Activated naive CD4-positive, alpha-beta T cell treated with anti-CD3 and anti-CD28 coated beads for 36 hours (primary cell): ENCODE measurements at regions of chr4 and their contacts with region 1.

Region 1: DNA sequence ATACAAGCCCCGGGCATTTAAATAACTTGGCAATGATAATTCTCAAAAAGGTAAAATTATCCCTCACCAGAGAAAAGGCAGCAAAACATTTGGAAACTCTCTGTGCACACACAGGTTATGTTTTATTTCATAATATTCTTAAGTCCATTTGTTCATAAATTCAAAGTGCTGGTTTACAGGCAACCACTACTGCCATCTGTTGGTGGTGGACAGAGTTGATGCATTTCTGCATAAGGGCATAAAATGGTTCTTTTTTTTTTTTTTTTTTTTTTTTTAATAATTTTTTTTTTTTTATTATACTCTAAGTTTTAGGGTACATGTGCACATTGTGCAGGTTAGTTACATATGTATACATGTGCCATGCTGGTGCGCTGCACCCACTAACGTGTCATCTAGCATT is 31.5 kb upstream of the IL21 start:
- DNase-seq: peak; percentile 88
- H3K4me3 Mint-ChIP-seq: no peak overlapping the region
- H3K27ac Mint-ChIP-seq: peak overlapping the region; percentile 31
- H3K4me1 Mint-ChIP-seq: peaks cover 13% of the 10 kb centered on the region
- H3K27me3 Mint-ChIP-seq: no peaks in the 10 kb centered on the region

Region 2: DNA sequence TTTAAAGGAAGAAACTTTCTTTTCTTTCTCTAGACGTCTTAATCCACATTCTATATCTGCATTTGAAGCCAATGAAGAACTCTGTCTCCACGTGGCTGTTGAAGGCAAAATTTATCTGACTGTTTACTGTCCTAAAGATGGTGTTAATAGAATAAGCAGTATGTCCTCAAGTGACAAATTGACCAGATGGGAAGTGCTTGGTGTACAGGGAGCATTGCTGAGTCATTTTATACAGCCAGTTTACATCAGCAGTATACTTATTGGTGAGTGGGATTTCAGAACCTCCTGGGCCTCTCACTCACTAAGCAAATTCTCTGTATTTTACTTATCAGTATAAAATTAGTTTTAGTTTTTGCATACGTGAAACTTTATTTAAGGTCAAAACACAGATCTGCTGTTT is 239.8 kb before region 1 on chr4:
- CTCF ChIA-PET with region 1: no interaction called
- intact Hi-C with region 1: no loop called
- DNase-seq: no peak
- H3K4me3 Mint-ChIP-seq: no peak overlapping the region
- H3K27ac Mint-ChIP-seq: no peak overlapping the region
- H3K4me1 Mint-ChIP-seq: no peaks in the 10 kb centered on the region
- H3K27me3 Mint-ChIP-seq: no peaks in the 10 kb centered on the region

Region 3: DNA sequence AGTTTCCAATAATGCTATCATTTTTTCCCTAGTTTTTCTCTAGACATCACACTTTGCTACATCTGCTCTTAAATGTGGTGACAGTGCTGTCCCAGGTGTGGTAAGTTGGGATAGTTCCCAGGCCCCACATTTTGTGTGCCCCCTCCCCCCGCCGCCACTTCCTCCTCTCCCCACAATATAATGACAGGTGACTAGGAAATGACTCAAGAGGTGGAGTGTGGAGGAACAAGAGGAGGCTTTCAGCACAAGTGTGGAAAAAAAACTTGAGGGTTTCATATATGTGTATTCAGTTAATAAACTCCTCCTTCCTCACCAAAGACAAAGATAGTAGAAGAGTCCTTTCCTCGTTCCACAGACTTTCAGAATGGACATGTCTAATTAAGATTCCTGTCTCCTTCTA is 13.2 kb before region 1 on chr4:
- CTCF ChIA-PET with region 1: interaction called, 22 read pairs
- intact Hi-C with region 1: no loop called
- DNase-seq: peak; percentile 55
- H3K4me3 Mint-ChIP-seq: no peak overlapping the region
- H3K27ac Mint-ChIP-seq: no peak overlapping the region
- H3K4me1 Mint-ChIP-seq: peaks cover 24% of the 10 kb centered on the region
- H3K27me3 Mint-ChIP-seq: peaks cover 2% of the 10 kb centered on the region